ENCODE measurements at regions of chr6 and their contacts with region 1.

Region 1: DNA sequence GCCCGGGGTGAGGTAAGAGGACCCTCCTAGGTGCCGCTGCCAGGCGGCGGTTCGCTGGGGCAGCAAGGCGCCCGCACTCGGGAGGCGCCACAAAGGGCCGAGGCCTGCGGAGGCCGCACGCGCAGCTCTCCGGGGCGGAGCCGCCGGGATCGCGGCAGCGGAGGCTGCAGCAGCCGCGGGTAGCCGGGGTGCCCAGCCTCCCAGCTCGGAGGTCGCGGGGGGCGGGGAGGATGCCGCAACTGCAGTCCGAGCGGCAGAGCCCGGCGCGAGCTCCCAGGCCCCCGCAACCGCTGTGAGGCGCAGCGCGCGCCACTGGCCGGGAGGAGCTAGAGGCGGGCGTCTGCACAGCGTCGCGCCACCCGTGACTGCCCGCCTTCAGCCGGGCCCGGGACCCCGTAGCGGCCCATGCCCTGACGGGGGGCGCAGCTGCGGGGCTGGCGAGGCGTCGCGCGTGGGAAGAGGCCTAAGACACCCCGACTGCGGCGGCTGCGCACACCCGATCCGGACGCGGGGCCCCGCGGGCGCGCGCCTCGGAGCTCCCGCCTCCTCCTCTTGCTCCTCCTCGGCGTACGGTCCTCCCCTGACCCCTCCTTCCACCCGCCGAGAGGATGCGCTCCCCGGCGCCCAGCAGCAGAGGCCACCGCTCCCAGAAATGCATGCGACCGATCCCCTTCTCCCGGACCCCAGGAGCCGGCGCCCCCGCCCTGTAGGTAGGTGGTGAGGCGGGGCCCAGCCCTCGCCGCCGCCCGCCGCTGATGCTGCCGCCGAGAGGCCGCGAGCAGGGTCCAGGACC is at the start of gene NCOA7:
- DNase-seq: peak; percentile 80
- H3K4me3 ChIP-seq: peak within 1 kb of the TSS; percentile 96
- H3K27ac ChIP-seq: peak within 1 kb of the TSS; percentile 84
- H3K4me1 ChIP-seq: peaks cover 61% of the 10 kb centered on the region
- CTCF ChIP-seq: peak; percentile 32; the same call in 1 of the 2 replicates
- total RNA-seq, gene NCOA7: 14.8 and 18.1 TPM in 2 replicates

Region 2: GRCh38 chr6:125554456-125554855 is 236.1 kb before region 1 on chr6:
- CTCF ChIA-PET with region 1: no interaction called
- POLR2A ChIA-PET with region 1: no interaction called
- intact Hi-C with region 1: no loop called
- DNase-seq: no peak
- H3K4me3 ChIP-seq: no peak overlapping the region
- H3K27ac ChIP-seq: no peak overlapping the region
- H3K4me1 ChIP-seq: no peaks in the 10 kb centered on the region
- CTCF ChIP-seq: no peak

Region 3: DNA sequence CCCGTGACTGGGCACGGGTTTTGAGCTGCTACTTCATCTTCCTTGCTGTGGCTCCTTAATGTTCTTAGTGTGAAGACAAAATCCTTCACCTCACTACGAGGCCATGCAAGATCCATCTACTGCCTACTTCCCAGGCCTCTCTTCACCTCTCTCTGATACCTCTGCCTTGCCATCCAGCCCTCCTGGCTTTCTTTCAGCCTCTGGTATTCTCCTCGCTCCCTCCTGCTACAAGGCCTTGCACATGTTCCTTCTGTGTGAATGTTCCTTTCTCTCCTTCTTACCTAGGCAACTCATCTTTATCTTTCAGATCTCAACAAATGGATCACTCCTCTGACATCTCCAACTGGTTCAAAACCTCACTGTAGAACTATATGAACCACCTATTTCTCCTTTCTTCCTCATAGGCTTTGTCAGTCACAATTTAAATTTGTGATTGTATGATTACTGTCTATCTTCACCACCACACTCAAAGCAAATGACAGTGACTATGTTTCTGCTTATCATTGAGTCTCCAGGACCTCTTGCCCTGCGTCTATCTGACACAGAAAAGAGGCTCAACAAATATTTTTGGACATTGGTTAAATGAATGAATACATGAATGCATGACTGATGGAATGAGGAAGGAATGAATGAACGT is 21.3 kb before region 1 on chr6:
- CTCF ChIA-PET with region 1: no interaction called
- POLR2A ChIA-PET with region 1: no interaction called
- intact Hi-C with region 1: no loop called
- DNase-seq: no peak
- H3K4me3 ChIP-seq: no peak overlapping the region
- H3K27ac ChIP-seq: no peak overlapping the region
- H3K4me1 ChIP-seq: no peaks in the 10 kb centered on the region
- CTCF ChIP-seq: no peak

Region 4: DNA sequence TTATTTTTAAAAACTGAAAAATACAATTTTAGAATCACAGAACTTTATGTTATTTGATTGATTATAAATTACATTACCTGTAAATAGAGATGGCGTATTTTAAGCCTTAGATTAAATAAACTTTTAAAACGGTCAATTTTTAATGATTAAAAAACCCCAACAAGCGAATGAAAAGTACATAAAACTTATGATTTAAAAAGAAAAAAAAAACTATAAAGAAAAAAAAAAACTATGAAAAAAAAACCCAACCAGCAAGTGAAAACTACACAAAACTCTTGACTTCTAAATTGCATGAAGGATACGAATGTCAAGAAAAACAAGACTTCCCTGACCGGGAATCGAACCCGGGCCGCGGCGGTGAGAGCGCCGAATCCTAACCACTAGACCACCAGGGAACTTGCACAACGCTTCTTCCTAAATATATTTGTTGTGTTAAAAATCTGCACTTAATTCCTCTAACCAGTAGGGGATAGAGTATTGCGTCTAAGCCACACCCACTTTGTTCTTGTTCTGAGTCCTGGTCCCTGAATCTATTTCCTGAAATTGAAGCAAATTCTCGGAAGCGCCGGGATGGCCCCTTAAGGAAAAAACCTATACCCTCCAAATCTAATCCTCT is 10.5 kb before region 1 on chr6:
- CTCF ChIA-PET with region 1: interaction called, 12 read pairs
- POLR2A ChIA-PET with region 1: interaction called, 106 read pairs
- intact Hi-C with region 1: loop called (anchors 1 kb)
- DNase-seq: peak; percentile 95
- H3K4me3 ChIP-seq: peak overlapping the region; percentile 74
- H3K27ac ChIP-seq: peak overlapping the region; percentile 91
- H3K4me1 ChIP-seq: peaks cover 20% of the 10 kb centered on the region
- CTCF ChIP-seq: 0 out of 2 replicates have a peak, but pooled peaks have one; percentile 37

Region 5: DNA sequence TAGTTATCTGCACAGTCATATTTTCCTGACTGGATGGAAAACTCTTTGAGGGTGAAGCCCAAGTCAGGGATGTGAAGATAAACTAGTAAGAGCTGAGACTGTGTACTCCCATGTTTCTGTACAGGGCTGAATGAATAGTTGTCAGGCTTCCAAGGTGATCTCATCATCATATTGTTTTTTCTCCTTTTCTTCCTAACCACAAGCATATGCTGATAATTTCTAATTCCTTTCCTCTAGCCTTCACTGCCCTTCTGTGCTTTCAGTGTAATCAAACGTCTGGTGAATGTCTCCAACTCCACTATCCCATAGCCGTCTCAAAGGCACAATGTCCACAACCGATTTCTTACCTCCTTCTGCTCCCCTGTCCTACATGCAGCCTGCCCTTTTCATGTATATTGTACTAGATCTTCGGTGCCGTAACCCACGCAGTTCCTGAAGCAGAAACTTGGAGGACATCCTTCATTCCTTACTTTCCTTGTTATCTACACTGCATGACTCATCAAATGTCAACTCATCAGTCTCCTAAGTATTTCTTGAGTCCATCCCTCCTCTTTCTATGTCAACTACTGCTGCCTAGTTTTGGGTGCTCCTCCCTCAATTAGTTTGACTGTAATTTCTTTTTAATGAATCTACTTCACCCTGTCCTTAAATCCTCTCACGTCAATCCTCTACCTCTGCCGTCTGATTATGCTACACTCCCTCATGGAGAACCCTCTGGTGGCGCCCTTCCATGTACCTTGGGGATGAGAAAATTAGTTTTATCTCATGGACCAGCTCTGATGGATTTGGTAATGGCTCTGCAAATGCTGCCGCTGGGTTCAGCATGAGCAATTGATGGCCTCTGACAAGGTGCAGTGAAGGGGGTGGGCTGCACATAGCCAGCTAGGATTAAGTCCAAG is 22.1 kb after region 1 on chr6:
- CTCF ChIA-PET with region 1: interaction called, 8 read pairs
- POLR2A ChIA-PET with region 1: interaction called, 47 read pairs
- intact Hi-C with region 1: no loop called
- DNase-seq: no peak
- H3K4me3 ChIP-seq: no peak overlapping the region
- H3K27ac ChIP-seq: no peak overlapping the region
- H3K4me1 ChIP-seq: peaks cover 81% of the 10 kb centered on the region
- CTCF ChIP-seq: no peak

Region 6: GRCh38 chr6:125906158-125906998 is 115.8 kb after region 1 on chr6:
- CTCF ChIA-PET with region 1: no interaction called
- POLR2A ChIA-PET with region 1: no interaction called
- intact Hi-C with region 1: loop called (anchors 5 kb)
- DNase-seq: peak; percentile 46
- H3K4me3 ChIP-seq: no peak overlapping the region
- H3K27ac ChIP-seq: no peak overlapping the region
- H3K4me1 ChIP-seq: no peaks in the 10 kb centered on the region
- CTCF ChIP-seq: peak; percentile 90

Region 7: GRCh38 chr6:125986300-125987025 is 195.9 kb after region 1 on chr6 and contains the start of gene TRMT11:
- CTCF ChIA-PET with region 1: no interaction called
- POLR2A ChIA-PET with region 1: interaction called, 14 read pairs
- intact Hi-C with region 1: no loop called
- DNase-seq: peak; percentile 87
- H3K4me3 ChIP-seq: peak within 1 kb of the TSS; percentile 78
- H3K27ac ChIP-seq: peak within 1 kb of the TSS; percentile 44
- H3K4me1 ChIP-seq: peaks cover 32% of the 10 kb centered on the region
- CTCF ChIP-seq: peak; percentile 16; the same call in 1 of the 2 replicates
- total RNA-seq, gene TRMT11: 42.5 and 46.8 TPM in 2 replicates

Region 8: DNA sequence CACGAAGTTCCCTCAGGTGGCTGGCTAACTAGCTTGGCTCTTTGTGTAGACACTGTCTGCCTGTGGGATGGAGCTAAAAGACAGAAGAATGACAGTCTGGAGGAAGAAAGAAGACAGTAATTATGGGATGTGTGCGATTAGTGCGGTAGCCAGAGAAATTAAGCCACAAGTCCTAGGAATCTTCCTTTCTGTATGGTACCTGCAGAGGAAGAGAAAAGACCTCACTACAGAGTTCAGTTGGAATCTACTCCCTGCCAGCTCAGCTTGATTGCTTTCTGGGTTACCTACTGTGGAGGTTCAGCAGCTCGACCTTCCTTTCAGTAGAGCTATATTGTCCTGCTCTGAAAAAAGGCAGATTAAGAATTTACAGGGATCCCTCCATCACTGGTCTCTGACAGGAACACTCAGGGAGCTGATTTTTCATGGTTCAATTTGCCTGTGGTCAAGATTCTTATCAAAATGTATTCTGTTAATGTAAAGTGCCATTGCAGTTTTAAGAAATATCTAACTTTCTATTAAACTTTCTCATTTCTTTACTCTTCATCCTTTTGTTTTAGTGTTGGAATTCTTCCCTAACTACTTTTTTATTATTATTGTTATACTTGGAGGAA is 736.5 kb after region 1 on chr6:
- CTCF ChIA-PET with region 1: no interaction called
- POLR2A ChIA-PET with region 1: no interaction called
- intact Hi-C with region 1: no loop called
- DNase-seq: no peak
- H3K4me3 ChIP-seq: no peak overlapping the region
- H3K27ac ChIP-seq: no peak overlapping the region
- H3K4me1 ChIP-seq: no peaks in the 10 kb centered on the region
- CTCF ChIP-seq: no peak

Region 9: DNA sequence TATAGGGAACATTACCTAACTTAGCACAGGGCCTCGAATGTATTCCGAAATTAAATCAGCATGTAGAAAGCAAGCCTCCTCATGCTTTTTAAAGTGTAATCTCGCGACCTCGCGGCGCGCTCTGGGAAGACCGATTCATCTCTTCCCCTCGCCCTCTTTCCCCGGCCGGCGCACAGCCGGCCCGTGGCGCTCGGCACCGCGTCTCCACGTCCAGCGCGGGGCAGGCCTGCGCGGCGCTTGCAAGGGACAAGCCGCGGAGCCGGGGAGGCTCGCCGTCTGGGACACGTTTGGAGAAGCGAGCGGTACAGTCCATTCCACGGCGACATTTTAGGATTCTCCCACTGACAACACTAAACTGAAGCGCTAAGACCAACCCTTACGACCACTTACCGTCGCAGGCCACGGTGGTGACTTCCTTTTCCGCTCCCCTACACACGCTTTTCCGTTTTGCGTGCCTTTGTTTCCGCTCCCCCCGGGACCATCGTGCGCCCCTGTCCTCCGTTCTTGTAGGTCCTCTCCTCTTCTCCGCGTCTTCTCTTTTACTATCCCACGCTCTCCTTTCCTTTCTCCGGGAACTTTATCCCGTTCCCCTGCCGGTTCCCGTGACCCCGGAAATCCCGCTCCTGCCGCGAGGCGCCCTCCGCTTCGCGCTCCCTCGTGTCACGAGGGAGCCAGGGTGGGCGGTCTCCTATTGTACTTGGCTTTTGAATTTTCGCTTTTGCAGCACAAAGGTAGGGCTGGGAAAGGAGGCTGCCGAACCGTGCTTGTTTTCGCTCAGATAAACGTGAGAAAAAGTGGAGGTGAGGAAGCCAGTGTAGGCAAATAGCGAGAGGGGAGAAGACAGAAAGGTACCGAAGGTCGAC is 1552.6 kb after region 1 on chr6 and contains the start of gene ECHDC1:
- CTCF ChIA-PET with region 1: no interaction called
- POLR2A ChIA-PET with region 1: no interaction called
- intact Hi-C with region 1: loop called (anchors 10 kb)
- DNase-seq: peak; percentile 76
- H3K4me3 ChIP-seq: peak within 1 kb of the TSS; percentile 76
- H3K27ac ChIP-seq: peak within 1 kb of the TSS; percentile 17
- H3K4me1 ChIP-seq: peaks cover 20% of the 10 kb centered on the region
- CTCF ChIP-seq: no peak
- total RNA-seq, gene ECHDC1: 18.6 and 20.1 TPM in 2 replicates

Measured in OCI-LY7 (cell line).